ENCODE measurements at regions of chr5 and their contacts with region 1.

Region 1: DNA sequence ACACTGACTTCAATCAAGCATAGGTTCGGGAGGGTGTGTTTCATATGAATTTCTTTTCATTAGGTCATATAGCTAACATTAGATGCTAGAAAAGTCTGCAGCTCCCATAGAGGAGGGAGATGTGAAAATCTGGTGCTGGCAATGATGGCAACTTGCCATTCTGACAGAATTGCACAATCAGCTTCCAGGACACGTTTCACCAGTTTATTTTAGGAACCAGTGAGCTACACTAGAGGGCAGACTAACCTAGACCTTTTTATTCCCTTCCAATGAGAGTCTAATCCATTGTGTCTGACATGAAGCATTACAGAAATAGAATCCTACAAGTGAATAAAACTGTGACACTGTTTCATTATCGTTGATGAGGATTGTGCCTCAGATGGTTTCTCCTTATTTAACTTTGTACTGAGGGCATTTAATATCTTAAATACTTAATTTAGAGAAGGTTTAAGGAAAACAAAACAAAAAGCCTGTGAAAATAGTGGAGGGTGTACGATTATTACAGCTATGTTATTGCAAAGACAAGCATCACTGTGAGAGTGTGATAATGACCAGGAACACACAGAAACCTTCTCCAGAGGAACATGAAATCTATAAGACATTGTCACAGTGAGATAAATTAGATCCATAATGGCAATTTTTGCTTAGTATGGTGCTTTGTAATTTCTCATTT is 363.3 kb upstream of the RPS23 start:
- DNase-seq: peak in 1 of 2 donors; percentile 88
- H3K4me3 ChIP-seq: no peak overlapping the region
- H3K27ac ChIP-seq: peak overlapping the region; percentile 61 to 77
- H3K4me1 ChIP-seq: peaks cover 5 to 19% of the 10 kb centered on the region in 2 donors
- H3K27me3 ChIP-seq: no peaks in the 10 kb centered on the region
- CTCF ChIP-seq: peak; percentile 62 to 80 (median 70)

Region 2: GRCh38 chr5:81134066-81134465 is 1507.4 kb before region 1 on chr5:
- intact Hi-C with region 1: no loop called
- DNase-seq: no peak
- H3K4me3 ChIP-seq: no peak overlapping the region
- H3K27ac ChIP-seq: no peak overlapping the region
- H3K4me1 ChIP-seq: no peaks in the 10 kb centered on the region
- H3K27me3 ChIP-seq: no peaks in the 10 kb centered on the region
- CTCF ChIP-seq: no peak

Region 3: DNA sequence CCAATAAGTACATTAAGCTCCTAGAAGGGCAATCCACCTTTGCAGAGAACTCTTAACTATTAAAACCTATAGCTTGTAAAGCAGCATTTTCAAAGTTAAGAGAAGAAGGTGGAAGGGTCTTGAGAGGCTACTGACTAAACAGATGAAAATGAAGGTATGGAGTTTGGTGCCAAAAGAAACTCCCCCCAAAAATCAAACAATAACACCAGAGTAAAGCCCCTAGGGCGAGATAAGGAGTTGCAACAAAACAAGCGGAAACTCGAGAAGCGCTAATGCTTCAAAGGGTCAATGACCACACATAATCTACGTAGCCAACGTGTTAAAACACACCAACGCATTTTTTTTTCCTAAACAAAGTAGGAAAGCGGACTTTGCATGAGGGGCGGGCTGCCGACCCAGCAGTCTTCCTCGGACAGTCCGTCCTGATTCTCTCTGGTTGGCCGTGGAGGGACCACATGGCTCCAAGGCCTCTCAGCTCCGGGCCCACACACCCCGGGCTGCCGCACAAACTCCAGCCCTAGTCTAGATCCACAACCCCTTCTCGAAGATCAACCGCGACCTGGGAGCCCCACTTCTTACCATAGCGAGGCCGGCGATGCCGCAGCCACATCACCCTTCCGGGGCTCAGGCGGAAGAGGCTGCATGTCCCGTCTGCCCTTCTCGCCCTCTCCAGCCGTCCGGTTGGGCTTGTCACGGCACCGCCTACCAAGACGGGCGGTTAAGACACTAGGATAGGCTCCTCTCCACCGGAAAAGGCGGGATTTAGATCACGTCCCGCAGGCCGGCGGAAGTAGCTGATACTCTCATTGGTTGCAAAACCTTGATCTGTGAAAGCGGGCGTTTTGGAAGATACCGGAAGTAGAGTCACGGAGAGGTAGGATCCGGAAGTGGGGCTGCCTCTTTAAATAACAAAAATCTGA is 435.5 kb after region 1 on chr5 and contains the starts of genes TMEM167A and XRCC4:
- intact Hi-C with region 1: loop called (anchors 5 kb)
- DNase-seq: peak; percentile 94 to 98
- H3K4me3 ChIP-seq: peak within 1 kb of the TSS; percentile 86 to 94
- H3K27ac ChIP-seq: peak within 1 kb of the TSS; percentile 89 to 90
- H3K4me1 ChIP-seq: peaks cover 0 to 17% of the 10 kb centered on the region in 2 donors
- H3K27me3 ChIP-seq: no peaks in the 10 kb centered on the region
- CTCF ChIP-seq: no peak
- total RNA-seq, gene TMEM167A: 38.3 TPM
- total RNA-seq, gene XRCC4: not detected

Region 4: GRCh38 chr5:83430130-83431010 is 788.9 kb after region 1 on chr5:
- intact Hi-C with region 1: loop called (anchors 10 kb)
- DNase-seq: peak in 1 of 2 donors; percentile 77
- H3K4me3 ChIP-seq: no peak overlapping the region
- H3K27ac ChIP-seq: no peak overlapping the region
- H3K4me1 ChIP-seq: peaks cover 0 to 3% of the 10 kb centered on the region in 2 donors
- H3K27me3 ChIP-seq: no peaks in the 10 kb centered on the region
- CTCF ChIP-seq: peak; percentile 54 to 84 (median 83)